Activated CD8-positive, alpha-beta T cell treated with anti-CD3 and anti-CD28 coated beads for 36 hours (primary cell): ENCODE measurements at regions of chr12 and their contacts with region 1.

Region 1: DNA sequence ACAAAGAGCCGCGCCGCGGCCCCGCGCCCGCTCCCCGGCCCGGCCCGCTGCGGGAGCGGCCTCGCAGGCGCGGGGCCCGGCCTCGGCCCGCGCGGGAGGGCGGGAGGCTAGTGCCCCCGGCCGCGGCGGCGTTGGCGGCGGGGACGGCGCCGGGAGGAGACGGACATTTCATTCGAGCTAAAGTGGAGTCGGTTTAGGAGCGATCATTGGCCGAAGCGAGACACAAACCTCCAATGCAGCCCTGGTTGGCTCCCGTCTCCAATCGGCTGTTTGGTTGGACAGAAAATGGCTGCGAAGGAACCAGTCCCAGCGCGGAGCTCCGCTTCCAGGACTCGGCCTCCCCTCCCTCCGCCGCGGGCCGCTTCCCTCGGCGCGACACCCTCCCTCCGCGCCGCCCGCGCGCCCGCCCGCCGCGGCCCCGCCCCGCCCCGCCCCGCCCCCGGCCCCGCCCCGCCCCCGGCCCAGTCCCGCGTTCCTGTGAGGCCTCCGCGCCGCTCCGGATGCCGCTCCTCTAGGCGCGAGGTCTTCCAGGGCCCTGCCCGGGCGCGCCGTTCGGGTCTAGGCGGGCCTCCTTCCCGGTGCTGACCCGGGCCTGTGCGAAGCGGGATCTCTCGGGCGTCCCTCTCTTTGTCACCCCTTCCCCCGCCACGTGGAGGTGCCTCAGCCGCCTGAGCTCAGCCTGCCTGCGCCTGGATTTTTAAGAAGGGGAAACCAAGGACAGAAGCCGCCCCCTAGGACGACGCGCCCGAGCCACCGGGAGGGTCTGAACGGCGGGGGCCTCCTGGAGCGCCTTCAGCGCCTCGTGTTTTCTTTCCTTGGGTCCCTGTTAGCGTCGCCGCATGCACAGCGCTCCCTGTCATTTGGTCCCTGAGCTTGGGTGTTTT is at the start of gene NFYB:
- DNase-seq: peak; percentile 93
- ATAC-seq: peak; percentile 98
- H3K4me3 Mint-ChIP-seq: peak within 1 kb of the TSS; percentile 81
- H3K27ac Mint-ChIP-seq: peak within 1 kb of the TSS; percentile 92
- H3K4me1 Mint-ChIP-seq: peaks cover 18% of the 10 kb centered on the region
- H3K27me3 Mint-ChIP-seq: no peaks in the 10 kb centered on the region
- CTCF ChIP-seq: no peak
- total RNA-seq, gene NFYB: 26.7 to 30.6 TPM

Region 2: GRCh38 chr12:104126548-104126947 is 11.6 kb before region 1 on chr12:
- CTCF ChIA-PET with region 1: interaction called, 6 read pairs
- POLR2A ChIA-PET with region 1: interaction called, 10 read pairs
- intact Hi-C with region 1: no loop called
- DNase-seq: no peak
- ATAC-seq: no peak
- H3K4me3 Mint-ChIP-seq: no peak overlapping the region
- H3K27ac Mint-ChIP-seq: no peak overlapping the region
- H3K4me1 Mint-ChIP-seq: peaks cover 15% of the 10 kb centered on the region
- H3K27me3 Mint-ChIP-seq: no peaks in the 10 kb centered on the region
- CTCF ChIP-seq: no peak